ENCODE measurements at regions of chr5 and their contacts with region 1.

Region 1: GRCh38 chr5:138132543-138132942 is 6.7 kb downstream of the NME5 start:
- DNase-seq: no peak
- H3K4me3 ChIP-seq: no peak overlapping the region
- H3K4me1 ChIP-seq: no peaks in the 10 kb centered on the region
- H3K27me3 ChIP-seq: no peaks in the 10 kb centered on the region

Region 2: DNA sequence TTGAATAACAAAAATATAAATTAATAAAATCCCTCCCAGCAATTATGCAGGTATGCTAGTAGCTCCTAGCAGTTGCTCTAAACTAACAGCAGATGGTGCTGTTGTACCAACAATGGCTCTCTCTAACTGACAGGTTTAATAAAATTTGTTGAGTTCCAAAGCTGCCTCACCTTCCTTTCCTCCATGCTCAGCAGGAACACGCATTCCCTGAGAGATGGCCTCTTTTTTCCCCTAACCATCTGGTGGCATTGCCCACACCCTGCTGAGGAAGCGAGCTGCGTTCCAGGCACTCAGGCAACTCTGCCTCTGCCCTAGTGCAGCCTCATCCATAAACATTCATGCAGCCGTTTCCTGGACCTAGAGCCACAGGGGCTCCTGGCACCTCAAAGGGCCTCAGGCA is 502.9 kb before region 1 on chr5:
- in situ Hi-C with region 1: no loop called
- DNase-seq: peak; percentile 32 to 63
- H3K4me3 ChIP-seq: no peak overlapping the region
- H3K4me1 ChIP-seq: no peaks in the 10 kb centered on the region
- H3K27me3 ChIP-seq: no peaks in the 10 kb centered on the region

Region 3: DNA sequence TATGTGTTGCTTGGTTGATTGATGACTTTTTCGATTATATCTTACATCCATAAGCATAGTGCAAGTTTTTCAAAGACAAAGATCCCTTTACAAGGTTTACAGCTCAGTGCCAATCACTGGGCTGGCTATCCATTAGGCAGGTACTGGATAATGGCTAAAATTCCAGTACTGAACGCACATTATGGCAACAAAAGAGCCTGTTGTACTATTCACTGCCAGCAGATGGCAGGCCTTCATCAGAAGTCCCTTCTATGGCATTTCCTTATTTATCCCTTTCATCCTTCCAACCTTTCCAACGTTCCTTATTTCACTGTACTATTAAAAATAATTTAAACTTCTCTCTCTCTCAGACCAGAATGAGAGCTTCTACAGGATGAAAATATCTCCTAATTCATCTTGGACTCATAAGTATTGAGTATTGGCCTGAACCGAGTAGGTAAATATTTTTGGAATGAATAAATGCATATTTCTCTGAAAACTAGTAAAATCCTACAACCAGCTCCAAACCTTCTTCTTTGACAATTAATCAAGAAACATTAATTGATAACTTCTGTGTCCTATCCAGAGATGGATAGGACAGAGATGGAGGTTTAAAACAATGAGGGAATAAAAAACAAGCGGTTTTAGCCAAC is 55.4 kb before region 1 on chr5:
- in situ Hi-C with region 1: loop called (anchors 5 kb)
- DNase-seq: peak; percentile 68 to 76
- H3K4me3 ChIP-seq: no peak overlapping the region
- H3K4me1 ChIP-seq: no peaks in the 10 kb centered on the region
- H3K27me3 ChIP-seq: no peaks in the 10 kb centered on the region

Region 4: DNA sequence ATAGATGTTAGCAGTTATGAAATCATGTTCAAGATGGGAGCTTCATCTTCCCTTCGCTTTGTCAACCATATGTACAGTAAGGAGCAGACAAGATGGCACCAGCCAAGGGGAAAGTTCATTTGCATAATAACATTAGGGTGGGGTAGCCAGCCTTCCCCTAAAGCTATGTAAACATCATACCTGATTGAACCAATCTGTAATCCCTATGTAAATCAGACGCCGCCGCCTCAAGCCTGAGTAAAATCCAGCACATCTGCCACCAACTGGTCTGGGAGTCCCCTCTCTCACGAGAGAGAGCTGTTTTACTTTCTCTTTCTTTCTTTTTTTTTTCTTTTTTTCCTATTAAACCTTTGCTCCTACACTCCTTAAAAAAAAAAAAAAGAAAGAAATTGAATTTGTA is 275.5 kb after region 1 on chr5:
- in situ Hi-C with region 1: no loop called
- DNase-seq: peak; percentile 79 to 83
- H3K4me3 ChIP-seq: no peak overlapping the region
- H3K4me1 ChIP-seq: peaks cover 13% of the 10 kb centered on the region
- H3K27me3 ChIP-seq: no peaks in the 10 kb centered on the region

Measured in HAP-1 (cell line).